B cell (primary cell): ENCODE measurements at regions of chr22 and their contacts with region 1.

Region 1: DNA sequence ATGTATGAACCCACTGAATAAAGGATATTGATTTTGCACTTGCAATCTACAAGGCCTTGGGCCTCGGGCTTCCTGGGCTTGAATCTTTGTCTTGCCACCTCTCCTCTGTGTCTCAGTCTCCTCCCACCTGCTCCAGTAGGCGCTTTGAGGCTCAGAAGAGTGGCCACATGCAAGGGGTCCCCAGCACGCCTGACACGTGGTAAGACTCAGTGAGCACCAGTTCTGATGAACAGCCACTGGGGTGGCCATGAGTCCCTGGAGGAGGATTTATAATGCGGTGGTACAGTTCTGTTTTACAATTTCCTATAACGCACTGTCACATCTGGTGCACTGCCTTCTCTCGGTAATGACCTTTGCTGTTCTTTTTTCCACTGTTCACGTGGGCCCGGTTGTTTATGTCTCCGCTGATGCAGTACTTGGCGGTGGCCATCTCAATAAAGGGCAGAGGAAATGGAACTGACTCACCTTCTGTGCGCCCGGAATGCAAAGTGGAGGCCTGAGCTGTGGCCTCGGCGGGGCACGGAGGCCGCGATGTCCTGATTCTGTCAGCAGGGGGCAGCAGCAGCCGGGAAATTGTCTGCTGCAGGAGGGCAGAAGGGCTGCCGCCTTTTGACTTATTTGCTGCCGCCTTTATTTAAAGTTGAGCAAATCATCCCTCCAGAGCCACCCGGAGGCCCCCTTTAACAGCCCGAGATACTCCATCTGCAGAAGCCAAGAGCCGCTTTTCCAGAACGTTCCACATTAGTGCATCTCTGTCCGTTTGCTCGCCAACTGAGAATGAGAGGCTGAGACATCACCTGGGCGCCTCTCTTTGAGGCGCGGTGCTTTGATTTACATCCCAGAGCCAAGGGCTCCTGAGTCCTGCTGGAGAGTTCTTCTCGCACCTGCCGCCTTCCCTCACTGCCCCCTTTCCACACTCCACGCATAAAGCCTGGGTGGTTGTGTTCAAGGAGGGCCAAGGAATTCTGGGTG is 6.0 kb upstream of the IFT27 start:
- DNase-seq: peak; percentile 86
- ATAC-seq: peak; percentile 97
- H3K4me3 ChIP-seq: no peak overlapping the region
- H3K4me3 Mint-ChIP-seq: peak overlapping the region; percentile 75
- H3K27ac ChIP-seq: no peak overlapping the region
- H3K27ac Mint-ChIP-seq: peak overlapping the region; percentile 96
- H3K4me1 ChIP-seq: peaks cover under 1 to 16% of the 10 kb centered on the region in 2 donors
- H3K4me1 Mint-ChIP-seq: peaks cover 13% of the 10 kb centered on the region
- H3K27me3 ChIP-seq: peaks cover 0 to 6% (median 0%) of the 10 kb centered on the region in 4 experiments
- H3K27me3 Mint-ChIP-seq: peaks cover 18% of the 10 kb centered on the region
- CTCF ChIP-seq: peak; percentile 96

Region 2: DNA sequence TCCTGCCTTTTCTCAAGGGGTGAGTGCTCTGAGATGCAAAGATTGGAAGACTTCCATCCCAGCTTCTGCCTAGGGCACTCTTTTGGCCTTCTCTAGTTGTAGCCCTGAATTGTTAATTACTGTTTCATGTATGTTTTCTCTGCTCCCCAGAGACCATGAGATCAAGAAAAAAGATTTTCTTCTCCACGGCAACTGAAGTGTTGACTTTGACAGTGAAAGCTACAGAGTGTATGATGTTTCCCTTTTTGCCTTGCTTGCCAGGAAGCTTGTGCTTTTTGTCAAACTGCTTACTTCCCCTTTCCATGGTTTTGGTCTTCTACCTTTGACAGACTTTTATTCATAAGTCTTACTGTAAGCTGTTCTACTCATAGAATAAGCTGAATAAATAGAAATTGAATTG is 229.7 kb before region 1 on chr22:
- CTCF ChIA-PET with region 1: interaction called, 6 read pairs
- POLR2A ChIA-PET with region 1: no interaction called
- intact Hi-C with region 1: loop called (anchors 1 kb)
- DNase-seq: peak; percentile 85
- ATAC-seq: peak; percentile 90
- H3K4me3 ChIP-seq: peak overlapping the region in 2 of 5 experiments; percentile 20 to 23
- H3K4me3 Mint-ChIP-seq: peak overlapping the region; percentile 78
- H3K27ac ChIP-seq: peak overlapping the region; percentile 88 to 89
- H3K27ac Mint-ChIP-seq: peak overlapping the region; percentile 98
- H3K4me1 ChIP-seq: peaks cover 33 to 55% of the 10 kb centered on the region in 2 donors
- H3K4me1 Mint-ChIP-seq: peaks cover 48% of the 10 kb centered on the region
- H3K27me3 ChIP-seq: no peaks in the 10 kb centered on the region
- H3K27me3 Mint-ChIP-seq: no peaks in the 10 kb centered on the region
- CTCF ChIP-seq: no peak

Region 3: GRCh38 chr22:36757668-36758211 is 24.2 kb before region 1 on chr22:
- CTCF ChIA-PET with region 1: interaction called, 27 read pairs
- POLR2A ChIA-PET with region 1: no interaction called
- intact Hi-C with region 1: loop called (anchors 1 kb)
- DNase-seq: peak; percentile 77
- ATAC-seq: peak; percentile 93
- H3K4me3 ChIP-seq: no peak overlapping the region
- H3K4me3 Mint-ChIP-seq: no peak overlapping the region
- H3K27ac ChIP-seq: no peak overlapping the region
- H3K27ac Mint-ChIP-seq: no peak overlapping the region
- H3K4me1 ChIP-seq: no peaks in the 10 kb centered on the region
- H3K4me1 Mint-ChIP-seq: no peaks in the 10 kb centered on the region
- H3K27me3 ChIP-seq: peaks cover 0 to 20% (median 1%) of the 10 kb centered on the region in 4 experiments
- H3K27me3 Mint-ChIP-seq: peaks cover 18% of the 10 kb centered on the region
- CTCF ChIP-seq: peak; percentile 84

Region 4: GRCh38 chr22:36811094-36811800 is 29.3 kb after region 1 on chr22:
- CTCF ChIA-PET with region 1: no interaction called
- POLR2A ChIA-PET with region 1: no interaction called
- intact Hi-C with region 1: no loop called
- DNase-seq: no peak
- ATAC-seq: no peak
- H3K4me3 ChIP-seq: no peak overlapping the region
- H3K4me3 Mint-ChIP-seq: no peak overlapping the region
- H3K27ac ChIP-seq: no peak overlapping the region
- H3K27ac Mint-ChIP-seq: no peak overlapping the region
- H3K4me1 ChIP-seq: peaks cover 0 to 3% of the 10 kb centered on the region in 2 donors
- H3K4me1 Mint-ChIP-seq: no peaks in the 10 kb centered on the region
- H3K27me3 ChIP-seq: peaks cover 0 to 26% (median 8%) of the 10 kb centered on the region in 4 experiments
- H3K27me3 Mint-ChIP-seq: peaks cover 45% of the 10 kb centered on the region
- CTCF ChIP-seq: no peak

Region 5: GRCh38 chr22:37043828-37044538 is 262.0 kb after region 1 on chr22:
- CTCF ChIA-PET with region 1: interaction called, 7 read pairs
- POLR2A ChIA-PET with region 1: no interaction called
- intact Hi-C with region 1: loop called (anchors 1 kb)
- DNase-seq: peak; percentile 70
- ATAC-seq: peak; percentile 95
- H3K4me3 ChIP-seq: no peak overlapping the region
- H3K4me3 Mint-ChIP-seq: no peak overlapping the region
- H3K27ac ChIP-seq: no peak overlapping the region
- H3K27ac Mint-ChIP-seq: peak overlapping the region; percentile 67
- H3K4me1 ChIP-seq: peaks cover 9 to 14% of the 10 kb centered on the region in 2 donors
- H3K4me1 Mint-ChIP-seq: peaks cover 15% of the 10 kb centered on the region
- H3K27me3 ChIP-seq: no peaks in the 10 kb centered on the region
- H3K27me3 Mint-ChIP-seq: peaks cover 16% of the 10 kb centered on the region
- CTCF ChIP-seq: peak; percentile 67